ENCODE measurements at regions of chrX and their contacts with region 1.

Region 1: GRCh38 chrX:13646154-13646549 is 6.8 kb upstream of the TCEANC start:
- DNase-seq: peak in 1 of 2 donors; percentile 44
- ATAC-seq: peak in 2 of 4 donors; percentile 53 to 54
- H3K4me3 ChIP-seq: no peak overlapping the region
- H3K27ac ChIP-seq: no peak overlapping the region
- H3K4me1 ChIP-seq: no peaks in the 10 kb centered on the region
- H3K27me3 ChIP-seq: peaks cover 0 to 43% (median 0%) of the 10 kb centered on the region in 3 donors
- CTCF ChIP-seq: peak; percentile 54

Region 2: GRCh38 chrX:13334491-13334890 is 311.7 kb before region 1 on chrX:
- intact Hi-C with region 1: no loop called
- DNase-seq: no peak
- ATAC-seq: no peak
- H3K4me3 ChIP-seq: no peak overlapping the region
- H3K27ac ChIP-seq: no peak overlapping the region
- H3K4me1 ChIP-seq: no peaks in the 10 kb centered on the region
- H3K27me3 ChIP-seq: peaks cover 0 to 3% (median 0%) of the 10 kb centered on the region in 3 donors
- CTCF ChIP-seq: no peak

Region 3: GRCh38 chrX:13515211-13515930 is 130.8 kb before region 1 on chrX:
- intact Hi-C with region 1: loop called in 1 of 2 experiments (anchors 10 kb)
- DNase-seq: no peak
- ATAC-seq: no peak
- H3K4me3 ChIP-seq: no peak overlapping the region
- H3K27ac ChIP-seq: no peak overlapping the region
- H3K4me1 ChIP-seq: no peaks in the 10 kb centered on the region
- H3K27me3 ChIP-seq: peaks cover 0 to 12% (median 0%) of the 10 kb centered on the region in 3 donors
- CTCF ChIP-seq: no peak

Region 4: DNA sequence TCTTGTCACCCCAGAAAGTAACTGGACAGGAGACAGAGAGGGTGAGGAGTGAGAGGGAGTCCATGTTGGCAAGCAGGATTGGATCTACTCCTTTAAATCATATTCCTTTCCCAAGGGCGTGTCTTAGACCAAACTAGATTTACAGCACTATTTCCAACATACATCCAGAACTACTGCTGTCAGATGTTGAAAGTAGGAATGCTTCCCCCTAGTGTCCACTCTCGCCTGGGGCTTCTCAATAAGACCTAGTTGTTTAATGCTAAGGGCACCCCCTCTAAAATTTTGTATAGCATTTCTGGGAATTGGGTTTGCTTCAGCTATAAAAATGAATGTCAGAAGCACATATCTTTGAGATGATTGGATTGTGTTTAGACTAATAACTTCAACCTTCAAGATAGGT is 101.7 kb after region 1 on chrX:
- intact Hi-C with region 1: no loop called
- DNase-seq: no peak
- ATAC-seq: peak in 3 of 4 donors; percentile 40 to 65 (median 58)
- H3K4me3 ChIP-seq: no peak overlapping the region
- H3K27ac ChIP-seq: no peak overlapping the region
- H3K4me1 ChIP-seq: no peaks in the 10 kb centered on the region
- H3K27me3 ChIP-seq: no peaks in the 10 kb centered on the region
- CTCF ChIP-seq: peak; percentile 38

Measured in psoas muscle (tissue), 8 donors.